Heart right ventricle (tissue), 16 donors: ENCODE measurements at regions of chr6 and their contacts with region 1.

Region 1: GRCh38 chr6:157323255-157323965 is at the start of gene TMEM242:
- DNase-seq: peak; percentile 92 to 93
- ATAC-seq: peak; percentile 94 to 98 (median 97)
- H3K4me3 ChIP-seq: peak within 1 kb of the TSS; percentile 61 to 88 (median 76)
- H3K27ac ChIP-seq: peak within 1 kb of the TSS; percentile 74 to 98 (median 95)
- H3K4me1 ChIP-seq: peaks cover 11 to 41% (median 30%) of the 10 kb centered on the region in 9 donors
- H3K27me3 ChIP-seq: no peaks in the 10 kb centered on the region
- CTCF ChIP-seq: peak; percentile 10 to 46 (median 29)
- total RNA-seq, gene TMEM242: 12.5 to 18.7 (median 16.7) TPM

Region 2: DNA sequence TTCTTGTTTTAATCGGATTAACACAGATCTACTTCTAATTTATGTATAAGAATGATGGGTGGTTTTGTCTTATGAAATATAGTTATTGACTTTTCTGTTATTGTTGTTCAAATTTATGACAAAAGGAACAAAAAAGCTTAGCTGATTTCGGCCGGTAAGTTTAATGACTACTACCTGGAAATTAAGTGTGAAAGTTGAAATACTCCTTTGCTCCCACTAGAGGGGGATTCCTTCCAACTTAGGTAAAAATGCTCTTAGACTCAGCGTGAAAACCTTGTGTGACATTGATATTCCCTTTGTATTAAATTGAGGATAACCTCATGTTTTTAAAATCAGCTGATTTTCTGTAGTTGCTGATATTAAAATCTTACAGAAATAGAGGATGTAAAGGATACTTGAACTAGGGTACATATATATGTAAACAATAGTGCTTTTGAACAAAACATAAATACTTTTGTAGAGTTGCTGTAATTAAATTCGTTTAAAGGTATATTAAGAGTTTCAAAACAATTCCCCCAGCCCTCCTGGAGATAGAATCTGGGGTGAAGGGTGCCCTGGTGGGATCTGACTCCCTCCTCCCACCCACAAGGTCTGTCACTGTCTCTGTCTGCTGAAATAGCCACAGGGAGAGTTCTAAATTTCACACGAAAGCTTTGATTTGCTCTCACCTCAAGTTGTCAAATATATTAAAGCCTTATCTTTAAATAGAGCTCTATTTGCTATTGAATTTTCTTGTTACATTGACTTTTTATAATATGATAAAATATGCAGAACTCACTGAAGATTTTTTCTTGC is 288.8 kb before region 1 on chr6:
- intact Hi-C with region 1: no loop called
- DNase-seq: no peak
- ATAC-seq: peak in 5 of 8 donors; percentile 55 to 76 (median 67)
- H3K4me3 ChIP-seq: no peak overlapping the region
- H3K27ac ChIP-seq: peak overlapping the region in 4 of 10 donors; percentile 29 to 86 (median 72)
- H3K4me1 ChIP-seq: peaks cover 0 to 52% (median 44%) of the 10 kb centered on the region in 9 donors
- H3K27me3 ChIP-seq: no peaks in the 10 kb centered on the region
- CTCF ChIP-seq: peak; percentile 37 to 76 (median 65)

Region 3: DNA sequence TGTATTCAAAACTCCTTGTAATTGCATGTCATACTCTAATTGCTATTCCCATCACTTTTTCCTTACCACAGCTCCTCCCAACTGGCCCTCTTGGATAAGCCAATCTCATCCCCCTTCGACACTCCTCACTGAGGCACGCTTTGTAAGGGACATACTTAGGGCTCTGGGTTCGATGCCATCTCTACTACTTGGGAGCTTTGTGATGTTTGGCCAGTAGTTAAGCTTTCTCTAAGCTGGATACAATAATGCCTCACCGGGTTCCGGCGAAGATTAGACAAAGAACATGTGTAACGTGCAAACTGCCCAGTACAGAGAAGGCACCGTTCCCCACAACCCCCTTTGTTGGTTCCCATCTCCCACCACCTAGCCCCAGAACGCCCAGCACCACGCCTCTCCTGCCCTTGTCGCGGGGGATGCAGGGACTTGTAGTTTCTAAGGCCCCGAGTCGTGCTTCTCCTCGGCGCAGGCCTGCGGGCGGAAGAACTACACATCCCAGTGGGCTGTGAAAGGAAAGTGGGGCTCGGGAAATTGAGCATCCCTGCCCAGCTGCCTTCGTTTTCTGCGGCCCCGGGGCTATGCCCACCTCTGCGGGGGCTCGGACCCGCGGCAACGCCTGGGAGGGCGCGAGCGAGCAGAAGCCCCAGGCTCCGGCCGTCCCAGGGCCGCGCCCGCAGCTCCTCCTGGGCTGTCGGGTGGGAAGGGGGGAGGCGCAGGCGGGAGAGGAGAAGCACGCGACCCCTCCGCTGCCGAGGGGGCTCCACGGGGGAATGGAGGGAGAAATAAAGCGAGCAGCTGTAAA is 56.4 kb after region 1 on chr6:
- intact Hi-C with region 1: loop called in 8 of 10 experiments (anchors 2 to 5 kb)
- DNase-seq: peak; percentile 87 to 94
- ATAC-seq: peak; percentile 90 to 95 (median 94)
- H3K4me3 ChIP-seq: peak overlapping the region; percentile 74 to 99 (median 95)
- H3K27ac ChIP-seq: peak overlapping the region; percentile 76 to 98 (median 96)
- H3K4me1 ChIP-seq: peaks cover 0 to 31% (median 22%) of the 10 kb centered on the region in 9 donors
- H3K27me3 ChIP-seq: no peaks in the 10 kb centered on the region
- CTCF ChIP-seq: no peak

Region 4: GRCh38 chr6:157434349-157435033 is 111.1 kb after region 1 on chr6:
- intact Hi-C with region 1: loop called in 1 of 10 experiments (anchors 10 kb)
- DNase-seq: peak; percentile 42 to 48
- ATAC-seq: peak; percentile 34 to 72 (median 56)
- H3K4me3 ChIP-seq: no peak overlapping the region
- H3K27ac ChIP-seq: peak overlapping the region in 9 of 10 donors; percentile 26 to 91 (median 76)
- H3K4me1 ChIP-seq: peaks cover 8 to 93% (median 69%) of the 10 kb centered on the region in 9 donors
- H3K27me3 ChIP-seq: no peaks in the 10 kb centered on the region
- CTCF ChIP-seq: no peak

Region 5: DNA sequence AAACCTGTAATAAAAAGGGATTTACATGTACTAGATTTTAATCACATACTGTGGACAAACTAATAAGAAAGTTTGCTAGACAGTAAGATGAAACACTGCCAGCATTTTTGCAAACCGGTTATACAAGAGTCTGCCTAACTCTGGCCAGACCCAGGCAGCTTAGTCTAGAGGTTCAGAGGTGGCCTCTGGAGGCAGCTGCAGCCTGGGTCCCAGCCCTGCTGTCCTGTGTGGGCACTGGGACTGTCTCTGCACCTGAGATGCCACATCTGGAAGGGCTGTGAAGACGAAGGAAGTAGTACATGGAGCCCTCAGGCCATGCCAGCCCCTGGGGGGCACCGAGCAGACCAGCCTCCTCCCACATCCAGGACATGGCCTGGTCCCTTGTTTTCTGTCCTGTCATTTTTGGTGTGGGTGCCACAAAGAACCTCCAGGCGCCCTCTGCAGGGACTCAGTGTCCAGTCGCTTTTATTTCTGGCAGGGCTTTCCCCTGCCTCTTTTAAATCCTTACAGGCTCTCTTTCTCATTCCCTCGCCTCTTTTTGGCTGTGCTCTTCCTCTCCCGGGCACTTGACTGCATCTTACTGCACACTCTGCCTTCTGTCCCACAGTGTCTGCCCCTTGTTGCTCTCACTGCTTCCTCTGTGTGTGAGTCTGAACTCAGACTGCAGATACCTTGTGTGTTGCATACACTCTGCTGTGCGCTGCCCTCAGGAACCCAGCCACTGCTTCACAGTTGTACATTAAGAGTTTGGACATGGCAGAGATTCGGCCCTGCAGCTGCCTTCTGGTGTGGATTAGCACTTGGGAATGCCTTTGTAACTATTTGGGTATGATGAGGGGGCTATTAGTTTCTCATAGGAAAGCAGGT is 274.3 kb after region 1 on chr6:
- intact Hi-C with region 1: loop called in 8 of 10 experiments (anchors 5 to 10 kb)
- DNase-seq: peak; percentile 37 to 49
- ATAC-seq: peak; percentile 47 to 72 (median 64)
- H3K4me3 ChIP-seq: no peak overlapping the region
- H3K27ac ChIP-seq: peak overlapping the region in 1 of 10 donors; percentile 15
- H3K4me1 ChIP-seq: peaks cover 0 to 9% (median 3%) of the 10 kb centered on the region in 9 donors
- H3K27me3 ChIP-seq: no peaks in the 10 kb centered on the region
- CTCF ChIP-seq: peak in 8 of 9 donors; percentile 44 to 71 (median 57)